Activated T-helper 2 cell treated with anti-CD3 and anti-CD28 coated beads, Interferon-gamma antibody, Interleukin-2, Interleukin-4, amounts not matched to agents 10 μg/mL and 5 μg/mL and 100 μg/mL, durations not matched to agents 14 hours and 24 hours and 36 hours (primary cell): ENCODE measurements at regions of chr16 and their contacts with region 1.

Region 1: GRCh38 chr16:87950765-87951549 is at the start of gene BANP:
- DNase-seq: peak; percentile 96
- H3K4me3 Mint-ChIP-seq: peak within 1 kb of the TSS; percentile 94
- H3K27ac Mint-ChIP-seq: peak within 1 kb of the TSS; percentile 99
- H3K4me1 Mint-ChIP-seq: peaks cover 46% of the 10 kb centered on the region
- H3K27me3 Mint-ChIP-seq: no peaks in the 10 kb centered on the region
- total RNA-seq, gene BANP: 39.7 and 40.8 TPM in 2 replicates

Region 2: DNA sequence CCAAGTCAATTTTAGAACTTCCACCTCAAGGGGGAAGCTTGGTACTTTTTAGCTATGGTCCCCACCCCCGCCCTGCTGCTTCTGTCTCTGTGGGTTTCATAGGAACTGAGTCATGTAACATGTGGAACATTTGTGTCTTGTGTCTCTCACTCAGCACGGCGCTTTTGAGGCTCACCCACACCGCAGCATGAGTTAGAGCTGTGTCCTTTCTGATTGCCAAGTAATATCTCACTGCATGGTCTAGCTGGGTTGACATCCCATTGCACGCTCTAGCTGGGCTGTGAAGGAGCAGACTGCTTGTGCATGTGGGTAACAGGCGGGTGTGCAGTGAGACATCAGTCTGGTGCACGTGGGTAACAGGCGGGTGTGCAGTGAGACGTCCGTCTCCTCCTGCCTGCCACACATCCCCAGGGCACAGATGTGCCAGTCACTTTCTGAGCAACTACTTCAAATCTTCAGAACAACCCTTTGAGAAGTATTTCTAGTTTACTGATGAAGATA is 55.3 kb before region 1 on chr16:
- intact Hi-C with region 1: loop called (anchors 5 kb)
- DNase-seq: peak; percentile 81
- H3K4me3 Mint-ChIP-seq: peak overlapping the region; percentile 73
- H3K27ac Mint-ChIP-seq: peak overlapping the region; percentile 100
- H3K4me1 Mint-ChIP-seq: peaks cover 50% of the 10 kb centered on the region
- H3K27me3 Mint-ChIP-seq: no peaks in the 10 kb centered on the region